Cardiac septum (tissue), 1 donor: ENCODE measurements at regions of chr15 and their contacts with region 1.

Region 1: GRCh38 chr15:25438601-25439368 is at the start of gene UBE3A:
- DNase-seq: peak; percentile 95
- total RNA-seq, gene UBE3A: 121 TPM

Region 2: GRCh38 chr15:25345943-25346342 is 92.8 kb before region 1 on chr15:
- intact Hi-C with region 1: loop called (anchors 1 kb)
- DNase-seq: peak; percentile 83